ENCODE measurements at regions of chr7 and their contacts with region 1.

Region 1: GRCh38 chr7:120987683-120988590 is 574 bp upstream of the CPED1 start:
- DNase-seq: peak; percentile 73 to 88 (median 84)
- ATAC-seq: peak; percentile 100
- H3K4me3 ChIP-seq: peak overlapping the region; percentile 33
- H3K4me3 Mint-ChIP-seq: peak overlapping the region; percentile 68 to 83 (median 80)
- H3K27ac ChIP-seq: no peak overlapping the region
- H3K27ac Mint-ChIP-seq: no peak overlapping the region
- H3K4me1 ChIP-seq: peaks cover 12 to 14% of the 10 kb centered on the region in 2 donors
- H3K4me1 Mint-ChIP-seq: peaks cover 7 to 24% (median 21%) of the 10 kb centered on the region in 7 donors
- H3K27me3 ChIP-seq: peaks cover 14 to 23% of the 10 kb centered on the region in 2 donors
- H3K27me3 Mint-ChIP-seq: peaks cover 46 to 66% (median 56%) of the 10 kb centered on the region in 5 donors

Region 2: DNA sequence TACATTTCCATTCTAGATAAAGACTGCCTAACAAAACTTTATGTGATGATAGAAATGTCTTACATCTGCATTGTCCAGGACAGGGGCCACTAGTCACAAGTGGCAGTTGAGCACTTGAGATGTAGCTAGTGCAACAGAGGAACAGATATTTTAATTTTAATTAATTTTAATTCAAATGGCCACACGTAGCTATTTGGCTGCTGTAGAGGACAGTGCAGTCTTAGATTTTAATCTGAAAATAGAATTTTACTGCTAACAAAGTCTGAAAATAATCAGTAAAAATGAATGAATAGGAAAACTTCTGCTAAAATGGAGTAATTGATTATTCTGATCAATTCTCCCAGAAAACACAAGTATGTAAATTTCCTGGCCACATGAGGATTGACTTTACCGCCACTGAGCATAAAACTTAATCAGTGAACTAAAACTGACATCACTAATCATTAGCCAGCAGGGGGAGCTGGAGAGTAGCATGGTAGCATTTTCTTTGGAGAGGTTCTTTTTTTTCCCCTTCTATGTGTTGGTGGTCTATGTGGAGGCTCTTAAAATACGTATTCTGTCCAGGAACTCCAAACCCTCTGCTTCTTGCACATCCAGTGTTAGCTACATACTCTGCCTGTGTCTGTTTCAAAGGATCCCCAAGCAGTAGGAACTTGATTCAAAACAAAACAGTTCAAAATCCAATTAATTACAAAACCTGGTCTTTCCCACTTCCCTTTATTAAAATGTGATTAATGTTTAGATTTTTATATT is 182.1 kb before region 1 on chr7:
- CTCF ChIA-PET with region 1: no interaction called
- POLR2A ChIA-PET with region 1: no interaction called
- intact Hi-C with region 1: loop called (anchors 2 to 5 kb)
- DNase-seq: peak; percentile 6 to 57 (median 38)
- ATAC-seq: peak; percentile 62
- H3K4me3 ChIP-seq: no peak overlapping the region
- H3K4me3 Mint-ChIP-seq: no peak overlapping the region
- H3K27ac ChIP-seq: no peak overlapping the region
- H3K27ac Mint-ChIP-seq: no peak overlapping the region
- H3K4me1 ChIP-seq: no peaks in the 10 kb centered on the region
- H3K4me1 Mint-ChIP-seq: no peaks in the 10 kb centered on the region
- H3K27me3 ChIP-seq: no peaks in the 10 kb centered on the region
- H3K27me3 Mint-ChIP-seq: peaks cover 0 to 10% (median 6%) of the 10 kb centered on the region in 5 donors

Region 3: GRCh38 chr7:120950539-120951308 is 37.2 kb before region 1 on chr7 and contains the start of gene ING3:
- CTCF ChIA-PET with region 1: no interaction called
- POLR2A ChIA-PET with region 1: no interaction called
- intact Hi-C with region 1: loop called (anchors 1 kb)
- DNase-seq: peak; percentile 97 to 99 (median 98)
- ATAC-seq: peak; percentile 93
- H3K4me3 ChIP-seq: peak within 1 kb of the TSS; percentile 80
- H3K4me3 Mint-ChIP-seq: peak within 1 kb of the TSS; percentile 81 to 99 (median 96)
- H3K27ac ChIP-seq: peak within 1 kb of the TSS; percentile 94
- H3K27ac Mint-ChIP-seq: peak within 1 kb of the TSS; percentile 96 to 99 (median 98)
- H3K4me1 ChIP-seq: peaks cover 5 to 9% of the 10 kb centered on the region in 2 donors
- H3K4me1 Mint-ChIP-seq: peaks cover 14 to 34% (median 25%) of the 10 kb centered on the region in 7 donors
- H3K27me3 ChIP-seq: no peaks in the 10 kb centered on the region
- H3K27me3 Mint-ChIP-seq: peaks cover 12 to 20% (median 15%) of the 10 kb centered on the region in 5 donors
- total RNA-seq, gene ING3: 26.4 to 36.1 (median 27.7) TPM

Region 4: GRCh38 chr7:121107923-121108498 is 120.1 kb after region 1 on chr7:
- CTCF ChIA-PET with region 1: interaction called, 11 read pairs
- POLR2A ChIA-PET with region 1: no interaction called
- intact Hi-C with region 1: loop called (anchors 1 kb)
- DNase-seq: peak in 7 of 9 donors; percentile 26 to 59 (median 54)
- ATAC-seq: peak; percentile 83
- H3K4me3 ChIP-seq: no peak overlapping the region
- H3K4me3 Mint-ChIP-seq: no peak overlapping the region
- H3K27ac ChIP-seq: no peak overlapping the region
- H3K27ac Mint-ChIP-seq: no peak overlapping the region
- H3K4me1 ChIP-seq: no peaks in the 10 kb centered on the region
- H3K4me1 Mint-ChIP-seq: no peaks in the 10 kb centered on the region
- H3K27me3 ChIP-seq: no peaks in the 10 kb centered on the region
- H3K27me3 Mint-ChIP-seq: peaks cover 0 to 27% (median 5%) of the 10 kb centered on the region in 5 donors

Region 5: DNA sequence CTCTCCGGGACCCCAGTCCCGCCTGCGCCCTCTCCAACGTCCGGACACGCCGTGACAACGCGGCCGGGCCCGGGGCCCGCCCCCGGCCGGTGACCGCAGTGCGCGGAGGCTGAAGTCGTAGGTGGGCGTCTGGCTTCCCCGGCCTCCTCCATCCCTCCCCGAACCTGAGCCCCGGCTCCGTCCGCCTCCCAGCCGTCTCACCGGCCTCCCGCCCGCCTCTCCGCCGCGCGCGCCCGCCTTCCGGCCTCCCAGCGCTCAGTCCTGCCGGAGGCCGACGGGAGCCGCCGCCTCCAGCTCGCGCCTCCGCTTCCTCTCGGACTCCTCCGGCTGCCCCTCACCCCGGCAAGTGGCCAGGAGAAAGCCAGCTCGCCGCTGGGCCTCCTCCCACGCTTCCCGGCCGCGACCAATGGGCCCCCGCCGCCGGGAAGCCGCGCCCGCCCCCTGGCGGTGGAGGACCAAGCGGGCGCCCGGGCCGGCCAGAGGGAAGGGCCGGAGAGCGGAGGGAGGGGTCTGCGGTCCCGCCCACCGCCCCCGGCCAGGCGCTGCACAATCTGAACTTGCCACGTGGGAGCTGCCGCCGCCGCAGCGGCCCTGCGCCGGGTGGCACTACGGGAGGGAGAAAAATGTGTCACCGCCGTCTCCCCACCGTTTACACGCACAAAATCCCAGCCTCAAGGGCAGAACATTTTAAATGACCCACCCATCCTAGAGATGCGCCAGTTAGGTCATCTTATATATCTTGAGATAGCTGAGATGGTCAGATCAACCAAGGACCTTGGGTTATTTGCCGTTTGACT is 408.2 kb after region 1 on chr7 and contains the start of gene FAM3C:
- CTCF ChIA-PET with region 1: no interaction called
- POLR2A ChIA-PET with region 1: no interaction called
- intact Hi-C with region 1: loop called in 1 of 2 experiments (anchors 10 kb)
- DNase-seq: peak; percentile 51 to 98 (median 65)
- ATAC-seq: peak; percentile 95
- H3K4me3 ChIP-seq: peak within 1 kb of the TSS; percentile 72
- H3K4me3 Mint-ChIP-seq: peak within 1 kb of the TSS; percentile 82 to 93 (median 88)
- H3K27ac ChIP-seq: peak within 1 kb of the TSS; percentile 78
- H3K27ac Mint-ChIP-seq: peak within 1 kb of the TSS; percentile 36 to 92 (median 84)
- H3K4me1 ChIP-seq: peaks cover 0 to 3% of the 10 kb centered on the region in 2 donors
- H3K4me1 Mint-ChIP-seq: peaks cover 14 to 44% (median 34%) of the 10 kb centered on the region in 7 donors
- H3K27me3 ChIP-seq: no peaks in the 10 kb centered on the region
- H3K27me3 Mint-ChIP-seq: no peaks in the 10 kb centered on the region
- total RNA-seq, gene FAM3C: 11.1 to 28.4 (median 21.0) TPM